ENCODE measurements at regions of chr6 and their contacts with region 1.

Region 1: DNA sequence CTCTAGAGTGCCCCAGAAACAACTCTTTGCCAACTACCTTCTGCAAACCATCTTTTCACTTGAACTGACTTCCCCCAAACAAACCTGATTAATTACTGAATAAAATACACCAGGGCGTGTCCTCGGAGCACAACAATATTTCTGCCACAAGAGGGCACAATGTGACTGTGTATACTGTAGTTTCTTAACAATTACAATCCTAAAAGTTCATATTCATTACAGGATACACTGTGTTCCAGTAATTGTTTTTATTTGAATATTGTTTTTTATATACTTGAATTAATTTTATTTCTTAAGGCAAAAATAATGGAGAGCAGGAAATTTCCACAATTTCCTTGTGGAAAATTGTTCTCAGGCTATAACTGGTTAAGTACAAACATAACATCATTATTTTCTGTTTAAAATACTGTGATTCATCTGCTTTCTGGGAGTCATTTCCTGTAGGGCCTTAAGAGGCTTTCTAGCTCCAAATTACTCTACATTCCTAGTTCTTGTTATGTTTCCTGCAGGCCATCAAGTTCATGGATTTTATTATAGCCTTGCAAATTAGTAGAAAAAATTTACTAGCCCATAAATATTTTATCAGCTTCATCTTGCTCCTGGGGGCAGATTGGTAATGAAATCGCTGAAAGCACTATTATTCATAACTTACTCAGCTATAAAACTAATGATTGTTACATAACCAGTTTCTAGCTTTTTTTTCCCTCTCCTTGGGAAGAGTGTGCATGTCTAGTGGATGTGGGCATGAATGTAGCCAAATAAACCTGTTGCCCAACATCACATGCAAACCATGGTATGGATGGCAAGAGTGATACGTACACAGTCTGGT is 51.9 kb upstream of the SLC22A16 start:
- DNase-seq: peak; percentile 62
- H3K4me3 Mint-ChIP-seq: no peak overlapping the region
- H3K27ac Mint-ChIP-seq: no peak overlapping the region
- H3K4me1 Mint-ChIP-seq: peaks cover 47% of the 10 kb centered on the region
- H3K27me3 Mint-ChIP-seq: no peaks in the 10 kb centered on the region
- CTCF ChIP-seq: peak; percentile 47

Region 2: GRCh38 chr6:110484310-110484709 is 44.0 kb before region 1 on chr6:
- CTCF ChIA-PET with region 1: no interaction called
- intact Hi-C with region 1: loop called (anchors 5 kb)
- DNase-seq: peak; percentile 21
- H3K4me3 Mint-ChIP-seq: no peak overlapping the region
- H3K27ac Mint-ChIP-seq: peak overlapping the region; percentile 6
- H3K4me1 Mint-ChIP-seq: peaks cover 49% of the 10 kb centered on the region
- H3K27me3 Mint-ChIP-seq: no peaks in the 10 kb centered on the region
- CTCF ChIP-seq: no peak

Region 3: GRCh38 chr6:110682460-110682853 is 154.1 kb after region 1 on chr6:
- CTCF ChIA-PET with region 1: interaction called, 6 read pairs
- intact Hi-C with region 1: loop called (anchors 1 kb)
- DNase-seq: peak; percentile 74
- H3K4me3 Mint-ChIP-seq: peak overlapping the region; percentile 12
- H3K27ac Mint-ChIP-seq: peak overlapping the region; percentile 64
- H3K4me1 Mint-ChIP-seq: peaks cover 12% of the 10 kb centered on the region
- H3K27me3 Mint-ChIP-seq: no peaks in the 10 kb centered on the region
- CTCF ChIP-seq: peak; percentile 60

Region 4: DNA sequence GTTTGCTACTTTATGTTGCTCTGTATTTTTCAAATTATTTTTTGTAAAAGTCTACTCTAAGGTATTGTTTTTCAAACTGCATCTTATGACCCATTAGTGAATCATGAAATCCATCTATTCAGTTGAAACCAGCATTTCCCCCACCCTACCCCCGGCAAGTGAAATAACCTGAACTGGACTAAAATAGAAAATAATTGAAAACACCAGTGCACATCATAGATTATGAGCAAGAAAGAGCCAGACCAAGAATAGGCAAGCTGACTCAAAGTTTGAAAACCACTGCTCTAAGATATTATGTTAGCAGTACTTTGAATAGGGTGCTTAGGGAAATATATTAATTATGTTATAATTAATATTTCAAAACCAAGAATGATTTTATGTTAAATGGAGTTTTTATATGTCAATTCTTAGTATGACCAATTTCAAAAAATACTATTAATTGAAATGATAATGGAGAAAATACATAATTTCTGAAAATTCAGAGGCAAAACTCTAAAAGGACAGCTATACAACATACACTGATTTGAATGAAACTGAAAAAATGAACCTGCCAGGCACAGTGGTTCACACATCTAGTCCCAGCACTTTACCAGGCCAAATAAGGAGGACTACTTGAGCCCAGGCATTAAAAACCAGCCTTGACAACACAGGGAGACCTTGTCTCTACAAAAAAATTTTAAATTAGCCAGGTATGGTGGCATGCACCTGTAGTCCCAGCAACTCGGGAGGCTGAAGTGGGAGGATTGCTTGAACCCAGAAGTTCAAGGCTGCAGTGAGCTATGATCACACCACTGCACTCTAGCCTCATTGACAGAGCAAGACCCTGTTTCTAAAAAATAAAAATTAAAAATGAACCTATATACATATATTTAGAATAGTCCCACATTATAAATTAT is 174.9 kb after region 1 on chr6:
- CTCF ChIA-PET with region 1: no interaction called
- intact Hi-C with region 1: no loop called
- DNase-seq: no peak
- H3K4me3 Mint-ChIP-seq: no peak overlapping the region
- H3K27ac Mint-ChIP-seq: no peak overlapping the region
- H3K4me1 Mint-ChIP-seq: peaks cover 9% of the 10 kb centered on the region
- H3K27me3 Mint-ChIP-seq: no peaks in the 10 kb centered on the region
- CTCF ChIP-seq: no peak

Region 5: GRCh38 chr6:110815217-110816109 is 287.1 kb after region 1 on chr6 and contains the start of gene CDK19:
- CTCF ChIA-PET with region 1: no interaction called
- intact Hi-C with region 1: loop called (anchors 10 kb)
- DNase-seq: peak; percentile 98
- H3K4me3 Mint-ChIP-seq: peak within 1 kb of the TSS; percentile 91
- H3K27ac Mint-ChIP-seq: peak within 1 kb of the TSS; percentile 91
- H3K4me1 Mint-ChIP-seq: peaks cover 17% of the 10 kb centered on the region
- H3K27me3 Mint-ChIP-seq: no peaks in the 10 kb centered on the region
- CTCF ChIP-seq: no peak
- total RNA-seq, gene CDK19: 17.7 and 24.3 TPM in 2 replicates

Region 6: GRCh38 chr6:110873981-110874879 is 345.9 kb after region 1 on chr6 and contains the start of gene AMD1:
- CTCF ChIA-PET with region 1: no interaction called
- intact Hi-C with region 1: loop called (anchors 5 kb)
- DNase-seq: peak; percentile 97
- H3K4me3 Mint-ChIP-seq: peak within 1 kb of the TSS; percentile 85
- H3K27ac Mint-ChIP-seq: peak within 1 kb of the TSS; percentile 98
- H3K4me1 Mint-ChIP-seq: peaks cover 20% of the 10 kb centered on the region
- H3K27me3 Mint-ChIP-seq: no peaks in the 10 kb centered on the region
- CTCF ChIP-seq: no peak
- total RNA-seq, gene AMD1: 74.0 and 74.6 TPM in 2 replicates

Region 7: GRCh38 chr6:110949679-110950285 is 421.5 kb after region 1 on chr6:
- CTCF ChIA-PET with region 1: no interaction called
- intact Hi-C with region 1: loop called (anchors 2 kb)
- DNase-seq: no peak
- H3K4me3 Mint-ChIP-seq: no peak overlapping the region
- H3K27ac Mint-ChIP-seq: no peak overlapping the region
- H3K4me1 Mint-ChIP-seq: peaks cover 34% of the 10 kb centered on the region
- H3K27me3 Mint-ChIP-seq: no peaks in the 10 kb centered on the region
- CTCF ChIP-seq: peak; percentile 47

Region 8: GRCh38 chr6:110999634-111000270 is 471.4 kb after region 1 on chr6:
- CTCF ChIA-PET with region 1: no interaction called
- intact Hi-C with region 1: loop called (anchors 1 kb)
- DNase-seq: no peak
- H3K4me3 Mint-ChIP-seq: no peak overlapping the region
- H3K27ac Mint-ChIP-seq: no peak overlapping the region
- H3K4me1 Mint-ChIP-seq: no peaks in the 10 kb centered on the region
- H3K27me3 Mint-ChIP-seq: no peaks in the 10 kb centered on the region
- CTCF ChIP-seq: no peak

Region 9: DNA sequence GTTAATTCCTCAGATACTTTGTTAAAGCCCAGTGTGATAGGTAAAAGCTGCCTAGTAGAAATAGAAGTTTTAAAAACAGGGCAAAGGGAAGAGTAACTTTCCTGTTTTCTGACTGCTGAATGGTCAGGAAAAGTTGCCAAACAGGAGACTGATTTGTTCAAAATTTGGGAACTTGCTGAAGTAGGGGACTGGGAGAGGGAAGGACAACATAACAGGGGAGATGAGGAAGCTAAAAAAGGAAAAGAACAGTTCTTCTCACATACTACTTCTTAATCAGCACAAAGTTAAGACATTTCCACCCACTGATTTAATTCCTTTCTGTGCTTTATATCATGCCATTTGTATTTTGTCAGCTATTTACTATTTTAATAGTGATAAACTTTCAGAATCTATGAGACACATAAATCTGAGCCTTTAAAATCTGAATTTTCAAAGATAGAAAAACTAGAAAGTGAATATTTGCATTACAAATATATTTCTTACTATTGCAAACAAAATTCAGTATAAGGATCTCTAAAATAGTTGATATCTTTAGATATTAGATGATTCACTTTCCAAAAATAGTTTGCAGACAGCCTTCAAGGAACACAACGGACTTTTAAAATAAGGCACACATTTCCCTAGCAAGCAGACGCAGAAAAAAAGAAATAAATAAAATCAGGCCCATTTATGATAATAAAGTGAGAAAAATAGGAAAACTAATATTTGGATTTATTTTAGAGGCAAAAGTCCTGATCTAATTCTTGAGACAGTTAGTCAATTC is 522.1 kb after region 1 on chr6:
- CTCF ChIA-PET with region 1: no interaction called
- intact Hi-C with region 1: no loop called
- DNase-seq: no peak
- H3K4me3 Mint-ChIP-seq: no peak overlapping the region
- H3K27ac Mint-ChIP-seq: no peak overlapping the region
- H3K4me1 Mint-ChIP-seq: no peaks in the 10 kb centered on the region
- H3K27me3 Mint-ChIP-seq: no peaks in the 10 kb centered on the region
- CTCF ChIP-seq: no peak